Left ventricle myocardium superior (tissue), 1 donor: ENCODE measurements at regions of chr5 and their contacts with region 1.

Region 1: GRCh38 chr5:147949711-147950573 is 43.6 kb upstream of the C5orf46 start:
- DNase-seq: no peak
- ATAC-seq: peak; percentile 53

Region 2: DNA sequence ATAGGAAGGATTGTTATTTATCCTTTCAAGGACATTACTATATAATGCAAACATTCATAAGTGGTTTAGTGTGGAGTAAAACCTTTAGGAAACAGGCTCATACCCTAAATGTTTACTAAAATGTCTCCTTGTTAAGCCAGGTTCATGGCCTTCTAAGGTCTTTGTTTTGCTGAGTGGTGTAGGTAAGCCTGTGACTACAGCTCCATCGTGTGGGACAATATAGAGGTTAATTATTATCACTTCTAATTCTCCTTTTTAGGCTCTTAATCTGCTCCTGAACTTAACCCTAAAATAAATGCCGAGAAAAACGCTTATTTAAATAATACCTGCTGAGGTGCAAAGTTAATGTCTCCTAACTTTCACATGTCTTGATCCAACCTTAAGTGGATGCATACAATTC is 157.7 kb after region 1 on chr5:
- intact Hi-C with region 1: loop called (anchors 5 kb)
- DNase-seq: no peak
- ATAC-seq: no peak